ENCODE measurements at regions of chr3 and their contacts with region 1.

Region 1: DNA sequence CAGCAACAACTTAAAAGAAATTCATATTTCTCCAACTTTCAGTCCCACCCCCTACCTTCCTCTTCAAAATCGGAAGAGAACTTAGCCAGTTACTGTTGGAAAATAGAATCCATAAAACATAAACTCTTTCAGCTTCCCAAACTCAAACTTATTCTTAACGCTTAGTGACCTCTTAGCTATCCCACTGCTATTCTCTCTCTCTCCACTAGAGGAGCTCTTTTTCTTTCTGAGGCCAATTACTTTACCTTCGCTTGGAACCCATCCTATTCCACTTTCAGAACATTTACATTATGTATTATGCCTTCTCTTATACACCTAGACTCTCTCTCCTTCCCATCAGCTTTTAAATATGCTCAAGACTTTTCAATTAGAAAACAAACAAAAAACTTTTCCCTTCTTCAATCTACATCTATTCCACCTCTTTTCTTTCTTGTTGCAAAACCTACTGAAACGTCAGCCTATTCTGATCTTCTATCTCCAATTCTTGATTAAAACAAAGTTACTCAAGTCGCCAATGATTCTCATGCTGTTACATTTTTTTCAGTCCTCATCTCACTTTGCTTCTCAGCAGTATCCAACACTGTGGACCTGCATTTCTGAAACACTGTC is 13.4 kb upstream of the GHSR start:
- DNase-seq: no peak
- ATAC-seq: peak; percentile 60
- H3K4me3 Mint-ChIP-seq: no peak overlapping the region
- H3K27ac Mint-ChIP-seq: no peak overlapping the region
- H3K4me1 Mint-ChIP-seq: peaks cover 2% of the 10 kb centered on the region
- H3K27me3 Mint-ChIP-seq: peaks cover 2% of the 10 kb centered on the region

Region 2: DNA sequence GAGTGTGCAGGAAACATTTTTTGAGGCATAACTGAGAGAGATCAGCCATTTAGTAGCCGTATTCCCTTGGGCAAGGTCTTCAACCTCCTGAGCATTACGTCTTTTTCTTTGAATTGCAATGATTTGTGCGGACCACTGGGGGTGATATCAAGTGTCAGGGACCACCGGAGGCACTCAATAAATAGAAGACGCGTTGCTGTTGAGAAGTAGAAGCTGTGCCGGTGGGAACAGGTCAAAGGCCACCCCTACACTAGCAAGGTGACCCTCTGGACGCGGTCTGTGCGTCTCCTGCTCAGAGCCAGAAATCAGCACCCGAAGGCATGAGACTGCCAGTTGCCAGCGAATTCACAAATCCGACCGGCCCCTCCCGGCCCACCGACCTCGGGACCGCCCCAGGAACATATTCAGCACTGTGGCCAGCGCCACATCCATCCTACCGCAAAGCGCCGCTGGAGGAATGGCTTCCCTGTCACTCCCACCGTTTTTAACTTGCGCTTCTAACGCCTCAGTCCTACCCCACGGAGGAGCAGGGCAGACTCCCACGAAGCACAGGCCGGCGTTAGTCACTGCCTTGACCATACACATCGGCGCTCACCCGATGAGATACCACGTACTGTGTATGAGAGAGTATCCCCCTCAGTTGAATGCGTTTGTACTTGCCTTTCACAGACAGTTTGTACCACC is 12.0 kb before region 1 on chr3:
- CTCF ChIA-PET with region 1: interaction called, 27 read pairs
- DNase-seq: peak; percentile 46
- ATAC-seq: peak; percentile 38
- H3K4me3 Mint-ChIP-seq: peak overlapping the region; percentile 37
- H3K27ac Mint-ChIP-seq: no peak overlapping the region
- H3K4me1 Mint-ChIP-seq: peaks cover 32% of the 10 kb centered on the region
- H3K27me3 Mint-ChIP-seq: peaks cover 87% of the 10 kb centered on the region

Region 3: DNA sequence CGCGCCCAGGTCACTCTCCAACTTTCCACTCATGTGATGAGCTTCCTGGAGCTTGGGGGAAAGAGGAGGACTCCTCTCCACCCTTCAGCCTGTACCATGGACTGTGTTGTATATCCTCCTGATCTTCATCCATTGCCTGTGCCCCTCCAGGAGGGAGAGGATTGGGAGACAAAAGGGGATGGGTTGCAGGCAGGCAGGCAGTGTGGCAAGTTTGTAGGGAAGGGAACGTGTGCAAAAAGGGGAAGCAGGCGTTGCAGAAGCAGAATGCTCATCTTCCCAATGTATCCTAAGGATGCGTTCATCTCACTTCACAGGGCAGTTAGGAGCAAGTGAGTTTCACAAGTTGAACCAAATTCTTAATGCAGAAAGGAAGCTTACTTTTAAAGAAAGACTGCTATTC is 14.7 kb after region 1 on chr3:
- CTCF ChIA-PET with region 1: interaction called, 22 read pairs
- DNase-seq: no peak
- ATAC-seq: no peak
- H3K4me3 Mint-ChIP-seq: peak overlapping the region; percentile 79
- H3K27ac Mint-ChIP-seq: peak overlapping the region; percentile 9
- H3K4me1 Mint-ChIP-seq: peaks cover 19% of the 10 kb centered on the region
- H3K27me3 Mint-ChIP-seq: peaks cover 10% of the 10 kb centered on the region